ENCODE measurements at regions of chr2 and their contacts with region 1.

Region 1: GRCh38 chr2:1750933-1751766 is 6.8 kb upstream of the PXDN start:
- DNase-seq: peak; percentile 82
- ATAC-seq: peak; percentile 82

Region 2: DNA sequence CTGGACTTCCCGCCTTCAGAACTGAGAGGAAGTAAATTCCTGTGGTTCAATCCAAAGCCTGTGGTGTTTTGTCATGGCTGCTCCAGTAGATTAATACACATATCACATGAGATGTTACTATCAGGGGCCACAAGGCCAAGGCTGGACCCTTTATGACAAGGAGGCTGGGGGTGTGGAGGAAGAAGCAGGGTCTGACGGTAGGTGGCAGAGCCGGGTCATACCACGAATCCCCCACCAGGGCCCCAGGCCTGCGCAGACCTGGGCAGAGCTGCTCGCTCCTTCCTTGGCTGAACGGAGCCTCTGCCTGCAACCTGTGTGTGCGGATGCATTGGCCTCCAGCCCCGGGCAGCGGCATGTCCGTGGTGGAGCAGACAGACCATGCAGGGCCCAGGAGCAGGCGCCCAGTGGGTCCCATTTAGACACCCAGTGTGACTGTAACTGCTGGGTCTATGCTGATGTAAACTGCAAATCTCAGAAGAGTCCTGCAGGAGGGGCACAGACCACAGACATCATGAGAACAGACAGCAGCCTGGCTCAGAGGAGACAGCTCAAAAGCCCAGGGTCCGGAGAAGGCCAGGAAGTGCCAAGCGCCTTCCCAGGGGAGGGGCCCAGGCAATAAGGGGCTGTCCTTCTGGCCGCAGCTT is 162.1 kb before region 1 on chr2:
- intact Hi-C with region 1: loop called (anchors 5 kb)
- DNase-seq: no peak
- ATAC-seq: no peak

Region 3: DNA sequence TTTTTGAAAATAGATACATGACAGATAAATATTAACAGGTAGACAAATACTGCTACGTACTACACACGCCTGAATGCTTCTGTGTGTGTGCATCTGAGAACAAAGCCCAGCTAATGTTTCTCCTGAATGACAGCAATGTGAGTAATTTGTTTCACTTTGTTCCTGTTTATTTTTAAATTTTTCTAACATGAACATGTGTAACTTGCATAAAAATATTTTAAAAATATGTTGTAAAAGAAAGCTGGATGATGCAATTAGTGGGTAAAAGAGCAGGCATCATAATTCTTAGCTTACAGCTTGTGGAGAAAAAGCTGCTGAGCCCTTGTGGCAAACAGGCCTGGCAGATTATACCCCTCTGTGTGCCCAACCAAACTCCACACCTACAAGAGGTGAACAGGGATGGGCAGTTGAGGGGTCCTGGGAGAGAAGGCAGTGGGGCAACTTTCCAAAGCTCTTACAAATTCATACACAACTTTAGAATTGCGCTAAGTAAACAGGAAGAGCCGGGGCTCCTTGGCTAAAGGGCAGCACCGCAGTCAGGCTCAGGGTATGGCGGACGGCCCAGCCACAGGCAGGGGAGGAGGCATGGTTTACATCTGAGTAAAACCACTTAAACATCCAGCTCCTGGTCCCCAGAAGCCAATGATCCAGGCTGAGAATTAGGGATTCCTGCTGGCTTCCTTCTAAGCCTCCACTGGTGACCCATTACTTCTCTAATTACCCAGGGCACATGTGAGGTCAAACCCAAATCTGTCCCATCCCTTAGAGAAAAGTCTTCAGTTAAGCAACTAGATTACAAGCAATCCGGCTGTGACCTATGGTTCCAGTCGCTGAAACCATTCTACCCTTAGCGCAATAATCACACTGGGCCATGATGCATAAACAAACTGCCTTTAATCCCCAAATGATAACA is 20.9 kb before region 1 on chr2:
- intact Hi-C with region 1: no loop called
- DNase-seq: peak; percentile 60
- ATAC-seq: peak; percentile 56